Sigmoid colon (tissue), 7 donors: ENCODE measurements at regions of chr6 and their contacts with region 1.

Region 1: DNA sequence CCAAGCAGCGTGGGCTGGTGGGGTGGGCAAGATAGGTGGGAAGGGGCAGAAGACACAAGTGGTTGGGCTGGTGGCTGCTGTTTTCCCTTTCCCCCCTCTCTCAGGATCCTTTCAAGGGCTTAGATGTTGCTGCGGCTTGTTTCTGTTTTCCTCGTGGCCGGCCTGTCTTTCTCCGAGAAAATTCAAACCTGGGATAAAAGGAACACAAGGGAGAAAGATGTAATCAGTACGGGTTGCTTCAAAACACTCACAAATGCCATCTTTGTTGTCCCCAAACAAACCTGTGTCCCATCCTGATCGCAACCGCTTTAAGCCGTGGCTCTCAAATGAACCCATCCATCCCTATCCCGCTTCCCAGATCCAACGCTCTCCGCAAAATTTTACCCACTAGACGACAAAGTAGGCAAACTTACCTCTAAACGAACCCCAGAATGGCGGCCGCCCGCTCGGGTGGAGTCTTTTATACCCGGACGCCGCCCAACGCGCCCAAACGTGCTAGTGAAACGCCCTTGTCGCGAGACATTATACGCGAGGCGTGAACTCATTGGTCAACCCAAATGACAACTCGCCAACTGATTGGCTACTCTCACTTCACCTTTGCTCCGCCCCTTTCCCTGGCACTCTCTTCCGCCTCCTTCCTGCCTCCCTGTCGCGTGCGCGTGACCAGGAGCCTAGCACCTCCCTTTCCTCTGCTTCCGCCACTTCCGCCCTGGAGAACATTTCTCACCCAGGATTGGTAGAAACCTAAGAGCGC is at the start of gene PPP1R10:
- DNase-seq: peak; percentile 100
- H3K4me3 ChIP-seq: peak within 1 kb of the TSS; percentile 59 to 79 (median 72)
- H3K27ac ChIP-seq: peak within 1 kb of the TSS; percentile 89 to 98 (median 95)
- H3K4me1 ChIP-seq: peaks cover 0 to 41% (median 39%) of the 10 kb centered on the region in 4 donors
- H3K27me3 ChIP-seq: no peaks in the 10 kb centered on the region
- CTCF ChIP-seq: no peak
- EP300 ChIP-seq: no peak
- POLR2A ChIP-seq: peak; percentile 100
- total RNA-seq, gene PPP1R10: 18.5 to 30.2 (median 28.3) TPM

Region 2: GRCh38 chr6:30672445-30673253 is 55.7 kb after region 1 on chr6 and contains the start of gene DHX16:
- intact Hi-C with region 1: loop called (anchors 2 kb)
- DNase-seq: peak; percentile 98
- H3K4me3 ChIP-seq: peak within 1 kb of the TSS; percentile 69 to 93 (median 80)
- H3K27ac ChIP-seq: peak within 1 kb of the TSS; percentile 81 to 92 (median 88)
- H3K4me1 ChIP-seq: peaks cover 0 to 25% (median 22%) of the 10 kb centered on the region in 4 donors
- H3K27me3 ChIP-seq: no peaks in the 10 kb centered on the region
- CTCF ChIP-seq: peak; percentile 69 to 91 (median 78)
- EP300 ChIP-seq: no peak
- POLR2A ChIP-seq: peak; percentile 6 to 61
- total RNA-seq, gene DHX16: 18.0 to 22.8 (median 21.3) TPM

Region 3: GRCh38 chr6:30686908-30687658 is 70.1 kb after region 1 on chr6:
- intact Hi-C with region 1: loop called (anchors 2 kb)
- DNase-seq: peak; percentile 98
- H3K4me3 ChIP-seq: peak overlapping the region; percentile 63 to 87 (median 72)
- H3K27ac ChIP-seq: peak overlapping the region; percentile 94 to 99 (median 98)
- H3K4me1 ChIP-seq: peaks cover 0 to 80% (median 73%) of the 10 kb centered on the region in 4 donors
- H3K27me3 ChIP-seq: no peaks in the 10 kb centered on the region
- CTCF ChIP-seq: no peak
- EP300 ChIP-seq: peak in 2 of 4 donors; percentile 68 to 72
- POLR2A ChIP-seq: peak; percentile 26 to 47

Region 4: DNA sequence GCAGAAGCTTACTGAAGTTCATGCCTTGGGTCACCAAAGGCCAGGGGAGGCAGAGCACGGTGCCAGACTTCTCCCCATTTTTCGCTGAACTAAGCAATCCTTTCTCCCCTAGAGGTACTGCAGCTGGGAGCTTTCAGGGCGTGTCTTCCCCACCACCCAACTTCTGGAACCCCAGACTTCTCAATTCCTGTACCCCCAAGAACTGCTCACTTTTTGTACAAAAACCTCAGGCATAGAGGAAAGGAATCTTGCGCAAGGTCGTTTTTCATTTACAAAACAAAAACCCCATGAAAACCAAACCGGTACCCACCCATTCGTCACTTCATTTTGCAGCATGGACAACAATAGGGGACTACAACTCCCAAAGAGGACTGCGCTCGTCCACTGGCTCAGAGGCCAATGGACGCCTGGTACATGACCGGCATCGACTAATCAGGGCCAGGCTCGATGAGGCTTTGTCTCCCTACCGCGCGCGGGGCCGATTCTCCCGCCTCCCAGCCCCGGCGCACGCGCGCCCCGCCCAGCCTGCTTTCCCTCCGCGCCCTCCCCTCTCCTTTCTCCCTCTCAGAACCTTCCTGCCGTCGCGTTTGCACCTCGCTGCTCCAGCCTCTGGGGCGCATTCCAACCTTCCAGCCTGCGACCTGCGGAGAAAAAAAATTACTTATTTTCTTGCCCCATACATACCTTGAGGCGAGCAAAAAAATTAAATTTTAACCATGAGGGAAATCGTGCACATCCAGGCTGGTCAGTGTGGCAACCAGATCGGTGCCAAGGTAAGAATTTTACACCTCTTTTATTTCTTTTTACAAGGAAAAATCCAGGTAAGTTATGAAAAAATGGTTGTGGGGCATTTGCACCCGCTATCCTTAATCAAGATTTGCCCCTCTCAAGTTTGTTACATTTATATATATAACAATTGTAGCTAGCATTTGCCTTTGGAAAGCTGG is 103.1 kb after region 1 on chr6 and contains the start of gene TUBB:
- intact Hi-C with region 1: loop called (anchors 1 kb)
- DNase-seq: peak; percentile 99
- H3K4me3 ChIP-seq: peak within 1 kb of the TSS; percentile 70 to 80 (median 78)
- H3K27ac ChIP-seq: peak within 1 kb of the TSS; percentile 95 to 98 (median 96)
- H3K4me1 ChIP-seq: peaks cover 0 to 61% (median 46%) of the 10 kb centered on the region in 4 donors
- H3K27me3 ChIP-seq: no peaks in the 10 kb centered on the region
- CTCF ChIP-seq: peak in 2 of 4 experiments; percentile 35 to 39
- EP300 ChIP-seq: peak in 1 of 4 donors; percentile 17
- POLR2A ChIP-seq: peak; percentile 95 to 97
- total RNA-seq, gene TUBB: 245 to 287 (median 267) TPM

Region 5: GRCh38 chr6:30742316-30743098 is 125.5 kb after region 1 on chr6 and contains the start of gene FLOT1:
- intact Hi-C with region 1: loop called (anchors 5 kb)
- DNase-seq: peak; percentile 99
- H3K4me3 ChIP-seq: peak within 1 kb of the TSS; percentile 71 to 90 (median 82)
- H3K27ac ChIP-seq: peak within 1 kb of the TSS; percentile 90 to 98 (median 96)
- H3K4me1 ChIP-seq: peaks cover 3 to 52% (median 42%) of the 10 kb centered on the region in 4 donors
- H3K27me3 ChIP-seq: no peaks in the 10 kb centered on the region
- CTCF ChIP-seq: no peak
- EP300 ChIP-seq: no peak
- POLR2A ChIP-seq: peak; percentile 80 to 87
- total RNA-seq, gene FLOT1: 141 to 206 (median 160) TPM

Region 6: GRCh38 chr6:31827286-31828079 is 1210.5 kb after region 1 on chr6 and contains the start of gene HSPA1B:
- intact Hi-C with region 1: loop called (anchors 10 kb)
- DNase-seq: peak; percentile 100
- H3K4me3 ChIP-seq: peak within 1 kb of the TSS; percentile 60 to 74 (median 68)
- H3K27ac ChIP-seq: peak within 1 kb of the TSS; percentile 86 to 98 (median 95)
- H3K4me1 ChIP-seq: peaks cover 0 to 49% (median 45%) of the 10 kb centered on the region in 4 donors
- H3K27me3 ChIP-seq: no peaks in the 10 kb centered on the region
- CTCF ChIP-seq: no peak
- EP300 ChIP-seq: peak in 1 of 4 donors; percentile 93
- POLR2A ChIP-seq: peak; percentile 100
- total RNA-seq, gene HSPA1B: 72.6 to 237 (median 113) TPM